Ascending aorta (tissue), 2 donors: ENCODE measurements at regions of chr20 and their contacts with region 1.

Region 1: DNA sequence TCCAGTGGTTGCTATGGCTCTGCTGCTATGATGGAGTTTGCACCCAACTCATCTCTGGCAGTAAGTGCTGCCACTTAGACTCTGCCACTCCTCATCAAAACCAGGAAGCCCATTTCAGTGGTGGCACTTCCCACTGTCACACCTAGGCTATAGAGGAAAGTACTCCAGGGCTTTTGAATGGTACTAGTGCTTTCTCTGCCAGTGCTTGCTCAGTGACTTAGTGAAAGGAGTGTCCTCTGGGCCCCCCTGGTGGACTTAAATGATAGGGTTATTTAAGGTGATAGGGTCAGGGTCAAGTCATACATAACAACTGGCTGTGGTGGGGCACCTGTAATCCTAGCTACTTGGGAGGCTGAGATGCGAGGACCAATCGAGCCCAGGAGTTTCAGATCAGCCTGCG is 22.8 kb downstream of the FITM2 start:
- DNase-seq: no peak
- H3K4me3 ChIP-seq: no peak overlapping the region
- H3K27ac ChIP-seq: no peak overlapping the region
- H3K4me1 ChIP-seq: no peaks in the 10 kb centered on the region
- H3K27me3 ChIP-seq: no peaks in the 10 kb centered on the region
- CTCF ChIP-seq: no peak

Region 2: DNA sequence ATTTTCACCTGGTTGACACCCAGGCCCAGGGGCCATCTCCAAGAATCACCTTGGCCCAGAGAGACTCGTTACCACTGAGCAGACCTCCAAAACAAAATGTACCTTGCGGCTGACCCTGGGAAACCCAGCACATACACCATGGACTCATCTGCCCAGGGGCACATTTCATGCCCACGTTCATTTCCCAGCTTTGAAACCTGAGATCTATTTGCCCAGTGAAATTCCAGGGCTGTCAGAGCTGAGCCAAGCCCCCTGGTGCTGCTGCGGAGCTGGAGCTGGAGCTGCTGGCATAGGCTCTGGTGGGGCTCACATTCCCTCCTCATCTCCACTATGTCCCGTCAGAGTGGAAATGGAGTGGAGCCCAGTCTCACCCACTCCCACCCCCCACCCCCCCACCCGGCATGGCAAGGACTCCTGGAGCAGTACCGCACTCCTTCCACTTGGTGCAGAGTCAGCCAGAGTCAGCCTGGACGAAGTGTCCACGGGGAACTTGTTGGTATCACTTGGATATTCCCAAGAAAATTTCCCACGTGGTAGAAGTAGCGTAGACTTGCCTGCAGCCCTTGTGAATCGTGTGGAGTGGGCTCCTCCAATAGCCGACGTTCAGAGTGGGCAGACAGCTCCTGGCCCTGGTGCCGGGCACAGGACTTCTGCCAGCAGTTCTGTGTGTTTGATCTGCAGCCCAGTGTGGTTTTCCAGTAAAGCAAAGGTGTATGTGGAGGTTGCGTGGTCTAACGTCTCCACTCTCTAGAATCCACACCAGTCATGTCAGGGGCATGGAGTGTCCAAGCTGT is 59.6 kb before region 1 on chr20:
- intact Hi-C with region 1: loop called (anchors 5 kb)
- DNase-seq: no peak
- H3K4me3 ChIP-seq: no peak overlapping the region
- H3K27ac ChIP-seq: no peak overlapping the region
- H3K4me1 ChIP-seq: no peaks in the 10 kb centered on the region
- H3K27me3 ChIP-seq: no peaks in the 10 kb centered on the region
- CTCF ChIP-seq: no peak

Region 3: GRCh38 chr20:45044084-45044573 is 755.9 kb after region 1 on chr20:
- intact Hi-C with region 1: no loop called
- DNase-seq: no peak
- H3K4me3 ChIP-seq: no peak overlapping the region
- H3K27ac ChIP-seq: no peak overlapping the region
- H3K4me1 ChIP-seq: no peaks in the 10 kb centered on the region
- H3K27me3 ChIP-seq: no peaks in the 10 kb centered on the region
- CTCF ChIP-seq: peak; percentile 33 to 90 (median 82)